MCF 10A (cell line): ENCODE measurements at regions of chr3 and their contacts with region 1.

Region 1: DNA sequence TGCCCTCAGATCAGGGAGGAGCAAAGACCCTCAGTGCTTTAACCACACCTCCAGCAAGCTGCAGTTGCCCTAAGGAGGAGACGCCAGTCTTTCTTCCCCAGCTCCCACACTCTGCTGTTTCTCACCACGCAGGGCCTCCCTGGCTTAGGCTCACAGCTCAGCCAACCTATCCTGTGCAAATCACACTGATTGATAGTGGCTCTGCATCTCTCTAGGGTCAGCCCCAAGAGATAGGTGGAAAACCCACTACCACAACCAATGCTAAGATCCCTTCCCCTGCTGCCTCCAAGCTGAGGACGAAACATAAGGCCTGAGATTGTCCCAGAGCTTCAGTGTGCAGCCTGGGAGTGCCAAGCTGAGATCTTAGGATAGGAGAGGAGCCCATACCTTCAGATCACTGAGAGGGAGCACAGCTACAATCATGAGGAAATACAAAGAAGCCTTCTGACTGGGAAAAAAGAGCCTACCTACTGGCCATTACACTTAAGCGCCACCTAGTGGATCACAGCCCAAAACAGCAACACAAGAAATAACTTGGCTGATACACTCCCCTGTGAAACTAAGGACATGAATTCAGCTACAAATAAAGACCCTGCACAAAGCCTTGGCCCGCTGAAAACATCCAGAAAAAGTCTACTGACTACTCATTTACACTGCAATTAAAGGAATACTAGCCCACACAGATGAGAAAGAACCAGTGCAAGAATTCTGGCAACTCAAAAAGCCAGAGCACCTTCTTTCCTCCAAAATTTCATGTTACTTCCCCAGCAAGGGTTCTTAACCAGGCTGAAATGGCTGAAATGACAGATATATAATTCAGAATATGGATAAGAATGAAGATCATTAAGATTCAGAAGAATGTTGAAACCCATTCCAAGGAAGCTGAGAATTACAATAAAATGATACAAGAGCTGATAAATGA is 271.5 kb upstream of the DCBLD2 start:
- DNase-seq: peak; percentile 80
- H3K4me3 Mint-ChIP-seq: no peak overlapping the region
- H3K27ac Mint-ChIP-seq: no peak overlapping the region
- H3K4me1 Mint-ChIP-seq: no peaks in the 10 kb centered on the region
- H3K27me3 Mint-ChIP-seq: no peaks in the 10 kb centered on the region
- CTCF ChIP-seq: peak; percentile 46

Region 2: GRCh38 chr3:98994128-98994762 is 178.8 kb before region 1 on chr3:
- CTCF ChIA-PET with region 1: interaction called, 10 read pairs
- POLR2A ChIA-PET with region 1: no interaction called
- intact Hi-C with region 1: no loop called
- DNase-seq: peak; percentile 55
- H3K4me3 Mint-ChIP-seq: no peak overlapping the region
- H3K27ac Mint-ChIP-seq: no peak overlapping the region
- H3K4me1 Mint-ChIP-seq: no peaks in the 10 kb centered on the region
- H3K27me3 Mint-ChIP-seq: no peaks in the 10 kb centered on the region
- CTCF ChIP-seq: peak; percentile 53

Region 3: GRCh38 chr3:99114565-99115291 is 58.3 kb before region 1 on chr3:
- CTCF ChIA-PET with region 1: interaction called, 16 read pairs
- POLR2A ChIA-PET with region 1: no interaction called
- intact Hi-C with region 1: loop called (anchors 1 kb)
- DNase-seq: peak; percentile 76
- H3K4me3 Mint-ChIP-seq: no peak overlapping the region
- H3K27ac Mint-ChIP-seq: no peak overlapping the region
- H3K4me1 Mint-ChIP-seq: no peaks in the 10 kb centered on the region
- H3K27me3 Mint-ChIP-seq: no peaks in the 10 kb centered on the region
- CTCF ChIP-seq: peak; percentile 82

Region 4: GRCh38 chr3:99199021-99199420 is 26.0 kb after region 1 on chr3:
- CTCF ChIA-PET with region 1: interaction called, 22 read pairs
- POLR2A ChIA-PET with region 1: no interaction called
- intact Hi-C with region 1: no loop called
- DNase-seq: no peak
- H3K4me3 Mint-ChIP-seq: no peak overlapping the region
- H3K27ac Mint-ChIP-seq: no peak overlapping the region
- H3K4me1 Mint-ChIP-seq: no peaks in the 10 kb centered on the region
- H3K27me3 Mint-ChIP-seq: no peaks in the 10 kb centered on the region
- CTCF ChIP-seq: no peak

Region 5: DNA sequence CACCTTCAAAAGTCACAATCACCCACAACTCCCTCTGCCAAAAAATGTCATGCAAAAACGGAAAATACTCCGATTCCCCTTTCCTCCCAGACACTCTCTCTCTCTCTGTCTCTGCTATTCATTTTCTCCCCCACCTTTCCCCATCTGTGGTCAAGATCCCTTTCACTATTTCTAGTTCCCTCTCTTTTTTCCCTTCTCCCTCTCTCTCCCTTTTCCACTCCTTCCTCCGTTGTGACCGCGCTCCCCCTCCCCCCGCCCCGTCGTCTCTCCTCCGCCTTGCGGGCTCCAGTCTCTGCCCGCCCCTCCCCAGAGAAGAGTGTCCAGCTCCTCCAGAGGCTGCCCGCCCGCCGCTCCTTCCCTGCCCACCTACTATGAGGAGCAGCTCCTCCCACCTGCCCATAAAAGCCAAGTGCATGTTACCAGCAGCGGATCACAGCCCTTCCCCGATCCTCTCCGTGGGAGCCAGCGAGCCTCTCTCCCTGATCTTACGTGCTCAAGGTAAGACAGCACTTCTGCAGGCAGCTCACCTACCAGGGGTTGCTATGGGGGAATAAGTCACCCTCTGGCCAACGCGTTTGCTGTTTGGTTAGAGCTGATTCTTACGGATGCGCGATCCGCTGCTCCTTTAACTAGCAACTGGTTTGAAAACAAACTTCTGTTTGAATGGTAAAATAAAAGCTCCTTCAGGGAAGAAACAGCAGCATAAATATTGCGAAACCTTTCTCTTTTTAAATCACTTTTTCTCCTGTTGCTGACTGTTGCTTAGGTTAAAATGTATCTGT is 465.4 kb after region 1 on chr3 and contains the start of gene COL8A1:
- CTCF ChIA-PET with region 1: interaction called, 4 read pairs
- POLR2A ChIA-PET with region 1: no interaction called
- intact Hi-C with region 1: loop called (anchors 5 kb)
- DNase-seq: peak; percentile 81
- H3K4me3 Mint-ChIP-seq: peak within 1 kb of the TSS; percentile 85
- H3K27ac Mint-ChIP-seq: peak within 1 kb of the TSS; percentile 86
- H3K4me1 Mint-ChIP-seq: peaks cover 53% of the 10 kb centered on the region
- H3K27me3 Mint-ChIP-seq: no peaks in the 10 kb centered on the region
- CTCF ChIP-seq: no peak
- total RNA-seq, gene COL8A1: 29.1 and 112 TPM in 2 replicates

Region 6: GRCh38 chr3:99747915-99748314 is 574.9 kb after region 1 on chr3:
- CTCF ChIA-PET with region 1: interaction called, 18 read pairs
- POLR2A ChIA-PET with region 1: interaction called, 5 read pairs
- intact Hi-C with region 1: loop called (anchors 1 kb)
- DNase-seq: peak; percentile 49
- H3K4me3 Mint-ChIP-seq: no peak overlapping the region
- H3K27ac Mint-ChIP-seq: no peak overlapping the region
- H3K4me1 Mint-ChIP-seq: peaks cover 14% of the 10 kb centered on the region
- H3K27me3 Mint-ChIP-seq: no peaks in the 10 kb centered on the region
- CTCF ChIP-seq: peak; percentile 39